ENCODE measurements at regions of chr6 and their contacts with region 1.

Region 1: DNA sequence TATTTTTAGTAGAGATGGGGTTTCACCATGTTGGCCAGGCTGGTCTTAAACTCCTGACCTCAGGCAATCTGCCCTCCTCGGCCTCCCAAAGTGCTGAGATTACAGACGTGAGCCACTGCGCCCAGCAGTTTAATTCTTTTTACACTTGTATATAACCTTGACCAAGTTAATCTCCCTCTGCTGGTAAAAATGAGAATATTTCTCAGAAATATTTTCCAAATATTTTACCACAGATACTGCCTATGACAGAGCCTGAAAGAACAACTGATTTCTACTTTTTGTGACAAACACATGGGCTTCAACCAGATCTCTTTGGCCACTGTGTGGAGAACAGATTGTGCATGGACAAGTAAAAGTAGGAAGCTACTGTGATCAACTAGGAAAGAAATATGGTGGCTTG is 21.2 kb upstream of the NHSL1 start:
- DNase-seq: no peak
- H3K4me3 ChIP-seq: no peak overlapping the region
- CTCF ChIP-seq: no peak
- POLR2A ChIP-seq: no peak

Region 2: DNA sequence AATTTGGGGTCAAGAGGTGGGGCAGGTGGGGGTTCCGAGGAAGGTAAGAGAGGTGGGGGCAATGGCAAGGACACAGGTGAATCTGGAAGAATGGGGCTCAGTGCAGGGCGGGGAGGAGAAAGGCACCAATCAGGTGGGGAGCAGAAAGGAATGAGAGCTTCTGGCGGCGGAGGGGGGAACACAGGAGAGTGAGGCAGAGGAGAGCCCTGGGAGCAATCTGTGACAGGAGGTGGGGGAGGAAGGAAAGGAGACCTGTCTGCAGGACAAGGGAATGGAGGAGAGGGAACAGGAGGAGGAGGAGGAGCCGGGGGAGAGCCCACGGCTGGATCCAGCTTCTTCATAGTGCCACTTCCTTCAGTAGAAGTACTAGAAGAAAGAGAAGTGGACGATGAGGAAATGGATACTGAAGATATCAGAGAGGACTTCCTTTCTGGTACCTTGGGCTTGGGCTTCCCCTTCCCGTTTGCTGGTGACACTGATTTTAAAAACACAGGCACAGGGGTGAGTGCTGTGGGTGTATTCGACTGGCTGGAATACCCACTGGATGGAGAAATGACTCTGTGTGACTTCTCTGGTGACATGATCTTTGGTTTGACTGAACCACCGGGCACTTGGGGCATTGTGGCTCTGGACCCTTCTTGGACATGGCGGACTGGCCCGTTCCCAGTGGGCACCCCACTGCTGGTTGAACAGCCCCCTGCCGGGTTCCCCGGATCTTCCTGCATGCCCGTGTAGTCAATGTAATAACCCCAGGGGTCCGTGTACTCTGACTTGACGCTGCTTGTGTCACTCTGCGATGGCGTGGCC is 89.0 kb before region 1 on chr6:
- intact Hi-C with region 1: loop called (anchors 10 kb)
- DNase-seq: no peak
- H3K4me3 ChIP-seq: no peak overlapping the region
- CTCF ChIP-seq: no peak
- POLR2A ChIP-seq: no peak

Measured in lower leg skin (tissue), 4 donors.